Cardiac septum (tissue), 1 donor: ENCODE measurements at regions of chr1 and their contacts with region 1.

Region 1: DNA sequence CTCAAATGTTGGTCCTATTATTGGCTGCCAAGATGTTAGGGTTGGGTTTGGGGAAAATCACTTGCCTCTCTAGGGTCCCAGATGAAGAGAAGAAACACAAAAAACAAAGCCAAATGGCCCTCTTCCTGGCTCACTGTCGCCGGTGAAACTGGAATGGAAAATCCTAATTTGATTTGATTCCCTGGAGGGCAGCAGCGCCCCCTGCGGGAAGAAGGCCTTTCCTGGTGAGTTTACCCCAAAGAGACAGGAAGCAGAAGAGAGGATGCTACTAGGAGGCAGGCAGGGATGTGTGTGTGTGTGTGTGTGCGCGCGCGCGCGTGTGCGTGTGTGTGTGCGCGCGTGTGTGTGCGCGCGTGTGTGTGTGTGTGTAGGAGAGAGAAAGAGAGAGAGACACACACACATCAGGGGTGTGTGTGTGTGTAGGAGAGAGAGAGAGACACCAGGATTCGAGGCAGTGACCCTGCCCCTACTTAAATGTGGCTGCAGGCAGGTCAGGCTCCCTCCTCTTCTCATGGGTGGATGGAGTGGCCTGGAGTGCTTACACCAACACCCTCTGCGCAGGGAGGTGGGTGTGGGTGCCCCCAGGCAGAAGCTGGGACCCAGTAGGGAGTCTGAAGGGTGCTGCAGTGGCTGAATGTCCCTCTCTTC is 3.1 kb upstream of the SELENON start:
- DNase-seq: peak; percentile 90

Region 2: DNA sequence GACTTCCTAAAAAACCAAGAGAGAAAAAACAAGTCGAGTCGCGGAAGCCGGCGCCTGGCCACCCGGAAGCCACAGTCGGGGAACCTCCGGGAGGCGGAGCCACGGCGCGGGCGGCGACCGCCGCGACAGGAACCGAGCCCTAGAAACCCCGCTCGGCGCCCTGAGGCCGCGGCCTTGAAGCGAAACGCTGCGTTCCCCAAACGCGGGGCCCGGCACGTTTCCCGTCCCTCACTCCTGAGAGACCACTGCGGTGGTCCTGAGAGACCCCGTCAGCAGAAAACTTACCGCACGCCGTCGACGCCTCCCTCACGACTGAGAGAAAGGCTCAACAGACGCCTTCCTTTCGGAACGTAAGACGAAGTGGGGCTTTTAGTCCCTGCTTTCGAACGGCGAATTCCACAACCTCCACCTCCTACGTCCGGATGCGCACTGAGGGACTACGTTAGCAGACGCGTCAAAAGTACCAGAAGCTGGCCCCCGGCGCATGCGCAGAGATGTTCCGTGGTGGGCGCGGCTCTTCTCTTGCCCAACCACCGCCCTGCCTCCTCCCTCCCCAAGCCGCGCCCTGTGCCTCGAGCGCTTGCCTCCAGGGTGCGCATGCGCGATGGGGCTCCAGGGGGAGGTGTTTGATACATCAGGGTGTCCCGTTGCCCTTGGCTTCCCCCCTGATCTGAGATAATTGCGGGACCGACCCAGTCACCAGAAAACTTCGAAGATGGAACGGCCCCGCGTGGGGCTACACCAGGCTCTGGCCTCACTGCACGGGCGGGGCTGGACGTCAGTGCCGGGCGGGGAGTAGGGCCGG is 549.7 kb before region 1 on chr1 and contains the start of gene RSRP1:
- intact Hi-C with region 1: loop called (anchors 5 kb)
- DNase-seq: peak; percentile 100
- total RNA-seq, gene RSRP1: 52.2 TPM

Region 3: DNA sequence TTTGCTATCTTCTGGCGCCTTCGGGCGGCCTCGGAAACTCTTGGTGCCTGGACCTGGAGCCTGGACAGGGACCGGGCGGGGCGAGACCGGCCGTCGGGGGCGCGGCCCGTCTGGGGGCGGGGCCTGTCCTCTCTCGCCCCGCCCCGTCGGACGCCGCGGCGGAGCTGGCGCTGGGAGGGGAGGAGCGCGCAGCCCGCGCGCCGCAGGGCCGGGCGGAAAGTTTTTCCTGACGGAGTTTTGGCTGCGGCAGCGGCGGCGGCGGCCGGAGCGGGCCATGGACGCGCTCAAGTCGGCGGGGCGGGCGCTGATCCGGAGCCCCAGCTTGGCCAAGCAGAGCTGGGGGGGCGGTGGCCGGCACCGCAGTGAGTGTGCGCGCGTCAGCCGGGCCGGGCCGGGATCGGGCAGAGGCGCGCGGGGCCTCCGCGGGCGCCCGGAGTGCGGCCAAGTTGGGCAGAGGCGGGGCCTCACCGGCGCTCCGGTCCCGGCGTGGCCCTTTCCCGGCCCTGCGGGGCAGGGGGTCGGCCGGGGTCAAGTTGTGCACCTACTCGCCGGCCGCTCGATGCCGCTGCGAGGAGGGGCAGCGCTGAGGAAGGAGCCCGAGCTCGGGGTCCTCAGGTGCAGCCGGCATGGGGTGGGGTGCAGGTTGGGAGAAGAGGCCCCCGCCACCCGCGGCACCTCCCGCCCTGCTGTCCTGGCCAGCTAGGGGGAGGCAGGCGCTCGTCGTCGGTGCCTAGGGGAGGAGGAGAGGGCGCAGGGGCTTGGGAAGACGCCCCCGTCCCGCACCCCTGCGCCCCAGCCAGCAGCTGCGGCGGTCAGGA is 253.3 kb before region 1 on chr1 and contains the start of gene LDLRAP1:
- intact Hi-C with region 1: loop called (anchors 5 kb)
- DNase-seq: peak; percentile 89
- total RNA-seq, gene LDLRAP1: 14.4 TPM

Region 4: GRCh38 chr1:25608488-25609178 is 188.3 kb before region 1 on chr1:
- intact Hi-C with region 1: loop called (anchors 2 kb)
- DNase-seq: peak; percentile 88

Region 5: DNA sequence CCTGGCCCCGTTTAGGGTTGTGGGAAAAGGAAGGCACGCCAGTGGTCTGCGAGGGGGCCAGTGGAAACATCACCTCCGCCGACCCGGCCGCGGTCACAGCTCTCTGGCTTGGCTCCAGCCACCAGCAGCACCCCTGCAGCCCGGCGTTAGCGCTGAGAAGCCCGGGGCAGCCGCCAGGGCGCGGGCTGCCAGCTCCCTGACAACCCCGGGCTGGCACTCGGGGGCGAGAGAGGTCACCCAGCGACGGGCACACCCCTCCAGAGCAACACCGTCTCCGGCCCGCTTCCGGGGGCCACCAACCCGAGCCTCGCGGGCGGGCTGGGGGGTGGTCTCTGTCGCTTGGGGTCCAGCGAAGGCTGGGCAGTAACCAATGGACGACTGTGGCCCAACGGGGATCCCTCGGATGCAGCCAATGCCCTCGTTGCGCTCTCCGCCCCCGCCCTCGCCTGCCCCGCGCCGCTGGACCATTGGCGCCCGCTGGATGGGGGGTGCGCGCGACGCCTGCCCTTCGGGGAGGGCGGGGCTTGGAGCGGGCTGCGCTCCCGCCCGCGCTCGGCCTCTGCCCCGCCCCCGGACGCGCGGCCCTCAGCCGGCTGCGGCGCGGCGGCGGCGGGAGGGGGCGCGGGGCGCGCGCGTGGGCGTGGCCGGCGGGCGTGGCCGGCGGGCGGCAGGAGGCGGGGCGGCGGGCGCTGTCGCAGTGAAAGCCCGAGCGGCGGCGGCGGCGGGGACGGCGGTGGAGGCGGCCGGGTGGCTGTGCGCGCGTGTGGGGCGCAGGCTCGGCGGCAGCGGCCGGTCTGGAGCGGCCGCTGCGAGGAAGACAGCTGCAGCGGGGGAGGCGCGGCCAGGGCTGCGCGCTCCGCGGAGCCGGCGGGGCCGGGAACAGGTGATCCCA is 180.6 kb before region 1 on chr1 and contains the start of gene MAN1C1:
- intact Hi-C with region 1: loop called (anchors 2 kb)
- DNase-seq: peak; percentile 93
- total RNA-seq, gene MAN1C1: 16.7 TPM

Region 6: DNA sequence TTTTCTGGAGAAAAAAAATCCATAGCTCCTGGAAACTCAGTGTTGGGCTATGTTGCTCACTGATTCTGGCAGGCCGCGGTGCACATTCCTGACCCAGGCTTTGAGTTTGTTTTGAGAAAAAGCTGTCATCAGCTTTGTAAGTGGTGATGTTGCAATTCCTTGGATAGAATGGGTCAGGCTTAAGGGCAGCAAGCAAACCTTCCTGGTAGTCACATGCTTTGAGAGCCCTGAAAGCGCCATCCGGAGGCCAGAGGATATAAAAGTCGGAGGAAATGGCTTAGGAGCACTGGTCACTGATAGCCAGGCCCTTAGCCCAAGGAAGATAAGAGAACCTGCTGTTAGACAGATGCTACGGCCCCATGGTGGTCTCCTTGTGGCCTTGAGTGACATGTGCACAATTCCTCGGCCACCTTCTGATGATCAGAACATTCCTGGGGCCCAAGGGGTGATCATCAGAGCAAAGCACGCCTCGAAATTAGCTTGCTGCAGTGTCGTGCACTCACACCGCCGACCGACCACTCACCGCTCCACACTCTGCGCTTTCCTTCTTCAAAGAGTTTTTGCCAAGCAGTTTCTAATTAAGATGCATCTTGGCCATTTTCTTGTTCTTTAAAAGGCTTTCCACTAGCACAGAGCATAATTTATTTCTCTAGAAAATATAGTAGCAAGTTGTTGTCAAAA is 101.7 kb before region 1 on chr1:
- intact Hi-C with region 1: loop called (anchors 5 kb)
- DNase-seq: peak; percentile 80

Region 7: GRCh38 chr1:25743826-25744581 is 52.9 kb before region 1 on chr1:
- intact Hi-C with region 1: loop called (anchors 2 kb)
- DNase-seq: no peak

Region 8: GRCh38 chr1:25858906-25859789 is 62.2 kb after region 1 on chr1 and contains the start of gene AUNIP:
- intact Hi-C with region 1: no loop called
- DNase-seq: peak; percentile 94
- total RNA-seq, gene AUNIP: not detected